Adrenal gland (tissue), 19 donors: ENCODE measurements at regions of chr3 and their contacts with region 1.

Region 1: GRCh38 chr3:45593708-45594609 is 592 bp upstream of the LIMD1 start:
- DNase-seq: peak; percentile 58 to 77 (median 73)
- H3K4me3 ChIP-seq: peak overlapping the region in 3 of 4 donors; percentile 29 to 74 (median 48)
- H3K27ac ChIP-seq: peak overlapping the region; percentile 72 to 92 (median 89)
- H3K4me1 ChIP-seq: peaks cover 35 to 43% of the 10 kb centered on the region in 2 donors
- H3K27me3 ChIP-seq: no peaks in the 10 kb centered on the region
- CTCF ChIP-seq: peak in 1 of 6 experiments; percentile 25
- POLR2A ChIP-seq: peak in 1 of 2 donors; percentile 78

Region 2: DNA sequence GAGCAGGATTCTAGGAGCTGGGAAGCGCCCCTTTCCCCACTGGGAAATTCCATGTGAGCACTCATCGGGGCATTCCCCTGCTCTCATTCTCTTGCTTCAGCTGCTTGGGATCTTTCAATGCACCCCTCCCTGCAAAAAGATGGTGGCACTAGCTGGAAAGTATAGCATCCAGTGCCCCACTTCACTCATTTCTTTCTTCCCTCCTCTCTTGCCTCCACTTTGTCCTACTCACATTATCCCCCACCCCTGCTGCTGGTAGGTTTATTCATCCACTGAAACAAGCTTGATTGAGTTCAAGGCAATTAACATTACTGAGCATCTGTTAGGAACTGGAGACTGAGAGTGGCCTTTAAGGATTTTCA is 84.2 kb before region 1 on chr3:
- intact Hi-C with region 1: loop called (anchors 5 to 10 kb)
- DNase-seq: no peak
- H3K4me3 ChIP-seq: no peak overlapping the region
- H3K27ac ChIP-seq: no peak overlapping the region
- H3K4me1 ChIP-seq: no peaks in the 10 kb centered on the region
- H3K27me3 ChIP-seq: no peaks in the 10 kb centered on the region
- CTCF ChIP-seq: no peak
- POLR2A ChIP-seq: no peak

Region 3: GRCh38 chr3:45516829-45517228 is 77.1 kb before region 1 on chr3:
- intact Hi-C with region 1: loop called (anchors 5 to 10 kb)
- DNase-seq: no peak
- H3K4me3 ChIP-seq: no peak overlapping the region
- H3K27ac ChIP-seq: peak overlapping the region in 2 of 5 donors; percentile 31 to 34
- H3K4me1 ChIP-seq: no peaks in the 10 kb centered on the region
- H3K27me3 ChIP-seq: no peaks in the 10 kb centered on the region
- CTCF ChIP-seq: no peak
- POLR2A ChIP-seq: no peak

Region 4: DNA sequence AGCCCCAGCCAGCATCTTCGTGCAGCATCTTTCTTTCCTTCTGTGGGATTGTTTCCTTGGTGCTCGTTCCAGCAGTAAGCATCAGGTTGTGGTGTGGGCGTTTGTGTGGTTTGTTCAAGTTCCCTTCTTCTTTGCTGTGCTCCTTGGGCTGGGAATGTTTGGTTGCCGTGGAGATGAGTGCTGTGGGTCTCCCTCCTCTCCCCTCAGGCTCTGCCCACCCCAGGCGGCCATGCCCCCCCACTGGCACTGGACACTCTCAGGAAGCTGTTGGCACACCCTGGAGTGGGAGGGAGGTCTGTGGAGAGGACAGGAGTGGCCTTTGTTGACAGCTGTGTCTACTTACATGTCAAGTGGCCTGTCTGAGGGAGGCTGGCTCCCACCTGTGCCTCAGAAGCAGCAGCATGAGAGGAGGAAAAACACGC is 48.8 kb after region 1 on chr3:
- intact Hi-C with region 1: loop called in 1 of 2 experiments (anchors 5 kb)
- DNase-seq: no peak
- H3K4me3 ChIP-seq: no peak overlapping the region
- H3K27ac ChIP-seq: no peak overlapping the region
- H3K4me1 ChIP-seq: peaks cover 20 to 49% of the 10 kb centered on the region in 2 donors
- H3K27me3 ChIP-seq: no peaks in the 10 kb centered on the region
- CTCF ChIP-seq: no peak
- POLR2A ChIP-seq: no peak

Region 5: DNA sequence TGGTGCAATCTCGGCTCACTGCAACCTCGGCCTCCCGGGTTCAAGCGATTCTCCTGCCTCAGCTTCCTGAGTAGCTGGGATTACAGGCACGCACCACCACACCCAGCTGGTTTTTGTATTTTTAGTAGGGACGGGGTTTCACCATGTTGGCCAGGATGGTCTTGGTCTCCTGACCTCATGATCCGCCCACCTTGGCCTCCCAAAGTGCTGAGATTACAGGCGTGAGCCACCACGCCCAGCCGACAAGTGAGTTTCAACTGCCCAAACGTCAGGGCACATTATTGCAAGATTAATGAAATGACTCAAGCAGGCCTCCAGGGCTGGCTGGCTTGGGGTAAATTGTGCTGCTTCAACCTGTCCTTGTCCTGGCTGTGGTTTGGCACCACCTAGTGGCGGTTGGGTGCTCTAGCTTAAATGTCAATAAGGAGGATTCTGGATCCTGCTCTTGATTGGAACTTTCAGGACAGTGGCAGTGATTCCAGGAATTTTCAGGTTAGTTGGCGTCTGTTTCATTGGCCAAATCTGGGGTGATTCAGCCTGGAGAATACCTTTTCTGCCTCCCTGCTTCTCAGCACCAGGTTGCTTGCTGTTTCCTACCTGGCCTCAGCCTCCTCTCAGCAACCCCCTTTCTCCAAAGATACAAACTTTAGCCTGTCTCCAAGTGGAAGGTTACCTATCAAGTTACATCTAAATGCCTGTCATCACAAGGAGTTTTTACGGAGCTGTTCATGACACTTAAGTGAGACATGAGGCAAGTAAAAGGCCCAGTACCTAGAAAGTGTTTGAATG is 62.8 kb after region 1 on chr3:
- intact Hi-C with region 1: loop called (anchors 2 kb)
- DNase-seq: peak; percentile 93 to 97 (median 96)
- H3K4me3 ChIP-seq: no peak overlapping the region
- H3K27ac ChIP-seq: no peak overlapping the region
- H3K4me1 ChIP-seq: peaks cover 0 to 17% of the 10 kb centered on the region in 2 donors
- H3K27me3 ChIP-seq: no peaks in the 10 kb centered on the region
- CTCF ChIP-seq: peak; percentile 93 to 99 (median 99)
- POLR2A ChIP-seq: no peak

Region 6: DNA sequence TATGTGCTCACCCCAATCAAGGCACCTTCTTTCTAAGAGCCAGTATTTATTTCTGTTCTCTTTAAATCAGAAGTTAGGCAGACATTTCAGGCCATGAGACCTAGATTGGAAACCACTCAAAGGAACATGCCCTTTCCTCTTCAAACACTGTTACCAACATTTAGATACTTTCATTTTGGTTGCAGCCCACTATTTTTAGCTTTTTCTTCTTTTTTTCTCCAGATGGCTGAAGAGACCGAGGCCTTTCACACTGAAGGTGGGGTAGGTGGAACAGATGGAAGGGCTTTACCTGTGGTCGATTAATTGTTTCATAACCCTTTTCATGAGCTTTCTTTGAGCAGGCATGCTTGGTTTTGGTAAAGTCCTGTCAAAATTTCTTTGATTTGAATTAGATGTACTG is 258.9 kb after region 1 on chr3:
- intact Hi-C with region 1: no loop called
- DNase-seq: no peak
- H3K4me3 ChIP-seq: no peak overlapping the region
- H3K27ac ChIP-seq: no peak overlapping the region
- H3K4me1 ChIP-seq: no peaks in the 10 kb centered on the region
- H3K27me3 ChIP-seq: peaks cover 7% of the 10 kb centered on the region
- CTCF ChIP-seq: no peak
- POLR2A ChIP-seq: no peak